A549 (cell line): ENCODE measurements at regions of chr2 and their contacts with region 1.

Region 1: GRCh38 chr2:121319953-121320352 is 35.0 kb upstream of the TFCP2L1 start:
- DNase-seq: no peak
- ATAC-seq: no peak
- H3K4me3 ChIP-seq: no peak overlapping the region
- H3K27ac ChIP-seq: no peak overlapping the region
- H3K4me1 ChIP-seq: no peaks in the 10 kb centered on the region
- CTCF ChIP-seq: no peak
- EP300 ChIP-seq: no peak
- POLR2A ChIP-seq: no peak
- RAD21 ChIP-seq: no peak

Region 2: GRCh38 chr2:121128754-121129659 is 190.9 kb before region 1 on chr2:
- CTCF ChIA-PET with region 1: interaction called, 13 read pairs
- POLR2A ChIA-PET with region 1: no interaction called
- DNase-seq: peak; percentile 43 to 60
- ATAC-seq: peak; percentile 69 to 88; a peak in 5 of 6 replicates
- H3K4me3 ChIP-seq: no peak overlapping the region
- H3K27ac ChIP-seq: no peak overlapping the region
- H3K4me1 ChIP-seq: no peaks in the 10 kb centered on the region
- CTCF ChIP-seq: peak; percentile 59
- EP300 ChIP-seq: no peak
- POLR2A ChIP-seq: no peak
- RAD21 ChIP-seq: peak; percentile 73 to 82